Right ventricle myocardium inferior (tissue), 1 donor: ENCODE measurements at regions of chr3 and their contacts with region 1.

Region 1: DNA sequence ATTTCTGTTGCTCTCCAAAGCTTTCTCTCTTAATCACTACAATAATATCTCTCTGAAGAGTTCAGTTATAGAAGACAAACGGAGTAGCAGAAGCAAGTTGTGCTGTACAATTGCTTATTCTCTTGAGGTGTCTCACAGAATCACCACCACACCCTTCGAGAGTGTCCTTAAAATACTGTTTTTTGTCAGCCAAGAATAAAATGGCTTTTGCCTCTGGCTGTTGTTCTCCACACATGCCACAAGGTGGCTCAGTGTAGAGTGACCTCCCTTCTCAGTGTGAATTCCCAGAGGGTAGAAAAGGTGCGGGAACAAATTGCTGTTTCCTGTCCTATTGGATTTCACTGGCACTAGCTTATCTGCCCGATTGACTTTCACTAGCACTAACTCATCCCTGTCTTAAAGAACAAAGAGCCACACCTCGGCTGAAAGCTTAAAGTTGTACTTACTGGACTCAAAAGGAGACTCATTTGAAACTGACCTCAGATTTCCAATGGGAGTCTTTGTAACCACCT is 134.2 kb upstream of the SATB1 start:
- DNase-seq: no peak
- ATAC-seq: no peak

Region 2: GRCh38 chr3:18389108-18389733 is 170.2 kb before region 1 on chr3:
- intact Hi-C with region 1: no loop called
- DNase-seq: no peak
- ATAC-seq: no peak

Region 3: GRCh38 chr3:18992709-18993108 is 433.3 kb after region 1 on chr3:
- intact Hi-C with region 1: loop called (anchors 5 kb)
- DNase-seq: no peak
- ATAC-seq: no peak

Region 4: DNA sequence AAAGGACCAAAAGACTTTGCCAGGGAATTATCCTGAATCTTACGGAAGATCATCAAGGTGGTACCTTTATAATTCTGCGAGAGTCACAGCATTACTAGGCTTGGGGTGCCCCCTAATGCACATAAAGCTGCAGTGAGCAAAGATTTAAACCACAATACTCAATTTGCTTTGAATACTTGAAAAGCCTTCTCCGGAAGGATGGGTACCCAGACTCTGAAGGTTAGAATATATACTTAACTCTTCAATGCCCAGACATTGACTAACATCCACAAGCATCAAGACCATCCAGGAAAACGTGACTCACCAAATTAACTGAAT is 471.1 kb after region 1 on chr3:
- intact Hi-C with region 1: loop called (anchors 2 kb)
- DNase-seq: no peak
- ATAC-seq: no peak